A549 (cell line): ENCODE measurements at regions of chr20 and their contacts with region 1.

Region 1: DNA sequence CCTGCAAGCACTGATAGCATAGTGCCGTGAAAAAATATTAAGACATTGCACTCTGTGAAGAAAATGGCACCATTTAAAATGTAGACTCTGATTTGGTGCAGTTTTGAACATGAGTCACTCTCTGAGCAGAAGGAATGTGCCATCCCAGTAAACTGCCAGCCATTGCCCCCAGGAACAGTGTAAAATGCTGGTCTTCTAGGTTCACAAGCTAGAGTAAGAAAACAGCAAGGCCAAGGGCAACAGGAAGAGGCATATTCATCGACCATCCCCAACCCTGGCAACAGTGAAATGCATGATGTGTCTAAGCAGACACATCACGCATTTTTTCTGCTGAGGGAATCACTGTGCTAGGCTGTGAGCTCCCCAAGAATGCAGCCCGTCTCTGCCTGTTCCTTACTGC is 163.2 kb upstream of the RIN2 start:
- DNase-seq: no peak
- ATAC-seq: no peak
- H3K4me3 ChIP-seq: no peak overlapping the region
- H3K27ac ChIP-seq: no peak overlapping the region
- H3K4me1 ChIP-seq: no peaks in the 10 kb centered on the region
- CTCF ChIP-seq: no peak
- EP300 ChIP-seq: no peak
- POLR2A ChIP-seq: no peak
- RAD21 ChIP-seq: no peak

Region 2: DNA sequence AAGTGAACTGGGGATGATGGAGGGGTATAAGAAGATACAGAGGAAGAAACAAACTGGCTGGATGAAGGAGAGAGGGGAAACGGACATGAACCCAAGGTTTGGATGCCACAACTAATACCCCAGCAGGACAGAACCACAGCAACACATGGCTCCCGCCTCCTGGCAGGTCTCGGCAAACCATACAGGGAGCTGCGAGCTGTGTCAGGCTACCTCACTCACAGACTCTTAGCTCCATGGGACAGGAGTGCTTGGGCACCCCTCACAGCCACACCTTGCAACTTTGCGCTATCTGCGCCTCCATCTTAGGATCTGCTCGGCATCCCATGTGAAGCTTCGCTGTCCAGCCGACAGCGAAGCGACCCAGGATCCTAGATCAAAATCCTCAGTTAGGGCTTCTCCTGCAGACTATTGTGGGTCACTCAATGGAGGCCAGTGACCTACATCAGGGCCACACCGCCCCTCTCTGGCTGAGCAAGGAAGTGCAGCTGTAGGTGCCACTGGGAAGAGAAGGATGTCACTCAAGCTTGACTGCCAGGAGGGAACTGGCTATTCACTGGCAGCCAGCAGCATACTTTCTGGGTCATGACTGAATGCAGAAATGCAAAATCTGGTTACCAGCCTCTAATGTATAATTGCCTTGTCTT is 11.2 kb before region 1 on chr20:
- CTCF ChIA-PET with region 1: interaction called, 11 read pairs
- POLR2A ChIA-PET with region 1: no interaction called
- DNase-seq: peak; percentile 61 to 64
- ATAC-seq: peak; percentile 65 to 91; a peak in 5 of 6 replicates
- H3K4me3 ChIP-seq: no peak overlapping the region
- H3K27ac ChIP-seq: no peak overlapping the region
- H3K4me1 ChIP-seq: no peaks in the 10 kb centered on the region
- CTCF ChIP-seq: peak; percentile 38
- EP300 ChIP-seq: no peak
- POLR2A ChIP-seq: no peak
- RAD21 ChIP-seq: peak; percentile 44 to 78; a peak in 4 of 5 replicates

Region 3: GRCh38 chr20:19934792-19935491 is 340.0 kb after region 1 on chr20:
- CTCF ChIA-PET with region 1: no interaction called
- POLR2A ChIA-PET with region 1: no interaction called
- DNase-seq: peak; percentile 51 to 74
- ATAC-seq: peak; percentile 59 to 82; a peak in 5 of 6 replicates
- H3K4me3 ChIP-seq: peak overlapping the region; percentile 17; the same call in 2 of the 3 replicates
- H3K27ac ChIP-seq: peak overlapping the region; percentile 31 to 64; a peak in 5 of 6 replicates
- H3K4me1 ChIP-seq: peaks cover 24% of the 10 kb centered on the region
- CTCF ChIP-seq: no peak
- EP300 ChIP-seq: no peak
- POLR2A ChIP-seq: no peak
- RAD21 ChIP-seq: no peak